CD8-positive, alpha-beta T cell (primary cell): ENCODE measurements at regions of chr11 and their contacts with region 1.

Region 1: DNA sequence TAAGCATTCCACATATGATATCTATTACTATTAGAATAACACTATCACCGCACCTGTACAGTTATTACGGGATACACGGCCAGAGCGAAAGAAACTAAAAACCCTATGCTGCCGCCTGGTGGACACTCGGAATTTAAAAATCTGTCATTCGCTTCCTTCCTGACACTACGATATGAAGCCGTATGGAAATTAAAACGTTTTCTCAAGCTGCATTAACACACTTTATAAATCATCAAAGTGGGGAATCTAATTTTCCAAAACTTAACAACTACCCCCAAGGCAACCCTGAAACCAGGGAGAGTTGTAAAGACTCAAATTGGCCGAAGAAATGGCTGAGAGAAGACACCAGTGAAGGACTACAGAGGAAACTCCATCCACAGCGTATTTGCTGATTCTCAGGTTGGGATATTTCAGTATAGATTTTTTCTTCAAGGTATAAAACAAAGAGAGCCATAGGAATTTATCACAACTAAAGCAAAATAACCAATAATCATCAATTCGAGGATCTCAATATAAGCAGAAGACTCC is 1.4 kb downstream of the CCDC73 start:
- DNase-seq: peak; percentile 34 to 73 (median 63)
- ATAC-seq: peak; percentile 58
- H3K4me3 ChIP-seq: no peak overlapping the region
- H3K4me3 Mint-ChIP-seq: peak overlapping the region; percentile 59
- H3K27ac ChIP-seq: no peak overlapping the region
- H3K27ac Mint-ChIP-seq: no peak overlapping the region
- H3K4me1 ChIP-seq: peaks cover 4% of the 10 kb centered on the region
- H3K4me1 Mint-ChIP-seq: peaks cover 6% of the 10 kb centered on the region
- H3K27me3 ChIP-seq: no peaks in the 10 kb centered on the region
- H3K27me3 Mint-ChIP-seq: no peaks in the 10 kb centered on the region
- CTCF ChIP-seq: peak; percentile 80

Region 2: GRCh38 chr11:32326522-32326921 is 466.5 kb before region 1 on chr11:
- CTCF ChIA-PET with region 1: interaction called, 8 read pairs
- POLR2A ChIA-PET with region 1: no interaction called
- intact Hi-C with region 1: loop called in 1 of 2 experiments (anchors 1 kb)
- DNase-seq: no peak
- ATAC-seq: no peak
- H3K4me3 ChIP-seq: no peak overlapping the region
- H3K4me3 Mint-ChIP-seq: no peak overlapping the region
- H3K27ac ChIP-seq: no peak overlapping the region
- H3K27ac Mint-ChIP-seq: no peak overlapping the region
- H3K4me1 ChIP-seq: no peaks in the 10 kb centered on the region
- H3K4me1 Mint-ChIP-seq: no peaks in the 10 kb centered on the region
- H3K27me3 ChIP-seq: peaks cover 0 to 3% of the 10 kb centered on the region in 2 experiments
- H3K27me3 Mint-ChIP-seq: peaks cover 14% of the 10 kb centered on the region
- CTCF ChIP-seq: no peak

Region 3: GRCh38 chr11:32706949-32707736 is 85.9 kb before region 1 on chr11:
- CTCF ChIA-PET with region 1: no interaction called
- POLR2A ChIA-PET with region 1: no interaction called
- intact Hi-C with region 1: no loop called
- DNase-seq: no peak
- ATAC-seq: no peak
- H3K4me3 ChIP-seq: no peak overlapping the region
- H3K4me3 Mint-ChIP-seq: no peak overlapping the region
- H3K27ac ChIP-seq: no peak overlapping the region
- H3K27ac Mint-ChIP-seq: no peak overlapping the region
- H3K4me1 ChIP-seq: no peaks in the 10 kb centered on the region
- H3K4me1 Mint-ChIP-seq: no peaks in the 10 kb centered on the region
- H3K27me3 ChIP-seq: no peaks in the 10 kb centered on the region
- H3K27me3 Mint-ChIP-seq: peaks cover 9% of the 10 kb centered on the region
- CTCF ChIP-seq: no peak

Region 4: DNA sequence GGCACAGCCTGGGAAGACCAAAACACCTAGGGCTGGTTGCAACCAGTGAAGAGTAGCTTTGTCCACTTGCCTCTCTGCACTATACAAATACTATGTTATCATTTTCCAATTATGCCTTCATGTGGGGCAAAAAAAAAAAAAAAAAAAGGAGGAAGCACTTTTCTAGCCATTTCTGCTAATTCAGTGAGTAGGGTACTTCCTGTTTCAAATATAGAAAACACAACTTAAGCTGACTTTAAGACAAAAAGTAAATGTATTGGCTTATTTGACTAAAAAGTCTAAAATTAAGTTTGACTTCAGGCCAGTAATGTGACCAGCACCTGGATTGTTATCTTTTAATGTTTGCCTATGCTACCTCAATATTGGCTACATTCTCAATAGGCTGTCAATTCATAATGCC is 13.9 kb before region 1 on chr11:
- CTCF ChIA-PET with region 1: interaction called, 11 read pairs
- POLR2A ChIA-PET with region 1: no interaction called
- intact Hi-C with region 1: no loop called
- DNase-seq: no peak
- ATAC-seq: no peak
- H3K4me3 ChIP-seq: no peak overlapping the region
- H3K4me3 Mint-ChIP-seq: no peak overlapping the region
- H3K27ac ChIP-seq: no peak overlapping the region
- H3K27ac Mint-ChIP-seq: no peak overlapping the region
- H3K4me1 ChIP-seq: no peaks in the 10 kb centered on the region
- H3K4me1 Mint-ChIP-seq: peaks cover 10% of the 10 kb centered on the region
- H3K27me3 ChIP-seq: no peaks in the 10 kb centered on the region
- H3K27me3 Mint-ChIP-seq: no peaks in the 10 kb centered on the region
- CTCF ChIP-seq: no peak

Region 5: GRCh38 chr11:32809313-32809712 is 16.3 kb after region 1 on chr11:
- CTCF ChIA-PET with region 1: interaction called, 11 read pairs
- POLR2A ChIA-PET with region 1: no interaction called
- intact Hi-C with region 1: no loop called
- DNase-seq: peak in 7 of 9 experiments; percentile 6 to 51 (median 21)
- ATAC-seq: peak; percentile 51
- H3K4me3 ChIP-seq: no peak overlapping the region
- H3K4me3 Mint-ChIP-seq: no peak overlapping the region
- H3K27ac ChIP-seq: no peak overlapping the region
- H3K27ac Mint-ChIP-seq: no peak overlapping the region
- H3K4me1 ChIP-seq: no peaks in the 10 kb centered on the region
- H3K4me1 Mint-ChIP-seq: no peaks in the 10 kb centered on the region
- H3K27me3 ChIP-seq: no peaks in the 10 kb centered on the region
- H3K27me3 Mint-ChIP-seq: no peaks in the 10 kb centered on the region
- CTCF ChIP-seq: no peak

Region 6: DNA sequence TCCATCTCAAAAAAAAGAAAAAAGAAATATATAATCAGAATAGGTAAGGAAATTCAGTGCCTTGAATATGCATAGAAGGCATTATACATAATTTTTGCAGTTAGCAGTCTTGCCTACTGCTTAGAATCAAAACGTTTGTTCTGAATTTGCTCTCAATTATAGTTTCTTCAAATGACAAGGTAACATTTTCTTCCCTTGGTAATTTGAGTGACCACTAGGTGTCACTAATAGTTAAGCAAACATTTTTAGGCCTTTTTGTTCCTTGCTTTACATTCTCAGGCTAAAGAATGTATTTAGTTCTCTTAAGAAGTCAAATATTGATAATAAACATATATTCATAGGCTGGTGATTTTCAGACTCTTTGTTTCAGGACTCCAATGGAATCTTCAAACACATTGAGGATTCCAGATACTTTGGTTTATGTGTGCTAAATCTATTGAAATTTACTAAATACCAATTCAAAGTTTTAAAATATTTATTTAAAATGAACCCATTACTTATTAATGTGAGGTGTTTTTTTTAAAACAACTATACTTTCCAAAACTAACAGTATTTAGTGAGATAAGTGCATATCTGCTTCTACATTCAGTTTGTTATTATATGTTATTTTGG is 167.6 kb after region 1 on chr11:
- CTCF ChIA-PET with region 1: no interaction called
- POLR2A ChIA-PET with region 1: no interaction called
- intact Hi-C with region 1: no loop called
- DNase-seq: peak in 2 of 9 experiments; percentile 62 to 69
- ATAC-seq: peak; percentile 46
- H3K4me3 ChIP-seq: no peak overlapping the region
- H3K4me3 Mint-ChIP-seq: no peak overlapping the region
- H3K27ac ChIP-seq: no peak overlapping the region
- H3K27ac Mint-ChIP-seq: no peak overlapping the region
- H3K4me1 ChIP-seq: no peaks in the 10 kb centered on the region
- H3K4me1 Mint-ChIP-seq: no peaks in the 10 kb centered on the region
- H3K27me3 ChIP-seq: no peaks in the 10 kb centered on the region
- H3K27me3 Mint-ChIP-seq: no peaks in the 10 kb centered on the region
- CTCF ChIP-seq: peak; percentile 78